SK-N-SH (cell line): ENCODE measurements at regions of chr3 and their contacts with region 1.

Region 1: GRCh38 chr3:138479438-138479863 is 45.0 kb downstream of the ESYT3 start:
- DNase-seq: peak; percentile 69
- H3K4me3 ChIP-seq: no peak overlapping the region; a peak in 1 of 4 replicates
- H3K27ac ChIP-seq: no peak overlapping the region
- H3K4me1 ChIP-seq: no peaks in the 10 kb centered on the region
- H3K27me3 ChIP-seq: no peaks in the 10 kb centered on the region
- CTCF ChIP-seq: peak; percentile 87
- EP300 ChIP-seq: no peak
- RAD21 ChIP-seq: peak; percentile 78

Region 2: DNA sequence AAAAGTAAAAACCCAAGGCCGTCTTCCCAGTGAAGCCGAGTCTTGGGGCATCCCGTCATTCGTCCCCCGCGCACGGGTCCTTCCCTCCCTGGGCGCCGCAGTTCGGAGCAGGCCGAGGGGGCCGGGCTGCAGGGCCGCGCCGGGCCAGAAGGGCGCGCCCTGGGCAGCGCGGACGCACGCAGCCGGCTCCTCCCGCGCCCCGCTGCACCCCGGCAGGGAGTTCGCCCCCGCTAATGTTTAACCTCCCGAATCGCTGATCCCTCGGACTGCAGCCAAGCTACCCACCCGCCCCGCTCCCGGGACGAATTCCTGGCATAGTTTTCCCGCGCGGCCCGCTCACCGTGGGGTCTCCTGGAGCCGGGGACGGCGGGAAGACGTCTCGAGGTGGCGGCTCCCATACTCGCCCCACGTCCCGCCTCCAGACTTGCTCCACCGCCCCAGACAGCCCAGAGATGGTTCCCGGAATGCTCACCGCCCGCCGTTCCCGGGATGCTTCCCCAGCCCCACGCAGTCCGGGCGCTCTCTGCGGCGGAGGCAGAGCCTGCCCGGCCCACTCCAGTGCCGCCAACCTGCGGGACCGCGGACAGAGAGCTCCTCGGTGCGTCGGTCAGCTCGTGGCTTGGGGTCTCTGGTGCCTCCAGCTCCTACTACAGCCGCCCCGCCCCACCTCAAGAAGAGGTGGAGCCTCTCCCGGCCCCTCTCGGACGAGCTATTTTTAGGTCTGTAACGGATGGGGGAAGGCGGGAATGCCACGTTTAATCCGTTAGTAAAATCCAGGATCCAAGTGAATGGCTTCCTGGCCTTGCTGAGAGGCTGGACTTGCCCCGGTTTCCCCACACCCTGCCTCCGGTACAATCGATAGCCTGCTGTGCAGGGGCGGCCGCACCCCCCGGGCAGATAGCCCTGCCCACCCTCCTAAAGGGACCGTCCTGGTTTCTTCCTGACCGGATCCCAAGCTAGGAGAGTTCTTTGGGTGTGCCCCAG is 364.2 kb before region 1 on chr3 and contains the start of gene DZIP1L:
- CTCF ChIA-PET with region 1: no interaction called
- POLR2A ChIA-PET with region 1: no interaction called
- DNase-seq: peak; percentile 90
- H3K4me3 ChIP-seq: peak within 1 kb of the TSS; percentile 85 to 93
- H3K27ac ChIP-seq: peak within 1 kb of the TSS; percentile 89 to 94
- H3K4me1 ChIP-seq: peaks cover 13 to 18% of the 10 kb centered on the region in 2 experiments; a peak in 3 of 4 replicates
- H3K27me3 ChIP-seq: no peaks in the 10 kb centered on the region
- CTCF ChIP-seq: peak; percentile 58
- EP300 ChIP-seq: peak in 1 of 2 experiments; percentile 40; a peak in 1 of 4 replicates
- RAD21 ChIP-seq: 0 out of 2 replicates have a peak, but pooled peaks have one; percentile 10
- polyA plus RNA-seq, gene DZIP1L: 6.4 and 8.0 TPM in 2 replicates

Region 3: GRCh38 chr3:138468886-138469285 is 10.6 kb before region 1 on chr3:
- CTCF ChIA-PET with region 1: interaction called, 10 read pairs
- POLR2A ChIA-PET with region 1: no interaction called
- DNase-seq: no peak
- H3K4me3 ChIP-seq: no peak overlapping the region
- H3K27ac ChIP-seq: no peak overlapping the region
- H3K4me1 ChIP-seq: peaks cover 0 to 5% of the 10 kb centered on the region in 2 experiments; a peak in 1 of 4 replicates
- H3K27me3 ChIP-seq: no peaks in the 10 kb centered on the region
- CTCF ChIP-seq: no peak
- EP300 ChIP-seq: no peak
- RAD21 ChIP-seq: no peak